Activated CD4-positive, alpha-beta T cell treated with anti-CD3 and anti-CD28 coated beads, Interleukin-2, amount 10 ng/mL, durations not matched to agents 24 days and 14 days (primary cell): ENCODE measurements at regions of chr15 and their contacts with region 1.

Region 1: GRCh38 chr15:60044636-60045270 is 40.6 kb downstream of the FOXB1 start:
- DNase-seq: peak; percentile 82
- H3K4me3 Mint-ChIP-seq: peak overlapping the region; percentile 54
- H3K27ac Mint-ChIP-seq: peak overlapping the region; percentile 78
- H3K4me1 Mint-ChIP-seq: peaks cover 20% of the 10 kb centered on the region
- H3K27me3 Mint-ChIP-seq: peaks cover 23% of the 10 kb centered on the region

Region 2: GRCh38 chr15:60017538-60018520 is 26.9 kb before region 1 on chr15:
- intact Hi-C with region 1: loop called (anchors 2 kb)
- DNase-seq: peak; percentile 72
- H3K4me3 Mint-ChIP-seq: peak overlapping the region; percentile 0
- H3K27ac Mint-ChIP-seq: peak overlapping the region; percentile 40
- H3K4me1 Mint-ChIP-seq: peaks cover 23% of the 10 kb centered on the region
- H3K27me3 Mint-ChIP-seq: peaks cover 24% of the 10 kb centered on the region

Region 3: GRCh38 chr15:60077581-60078359 is 33.0 kb after region 1 on chr15:
- intact Hi-C with region 1: loop called (anchors 1 kb)
- DNase-seq: peak; percentile 64
- H3K4me3 Mint-ChIP-seq: no peak overlapping the region
- H3K27ac Mint-ChIP-seq: peak overlapping the region; percentile 61
- H3K4me1 Mint-ChIP-seq: peaks cover 39% of the 10 kb centered on the region
- H3K27me3 Mint-ChIP-seq: peaks cover 8% of the 10 kb centered on the region

Region 4: GRCh38 chr15:60128000-60128376 is 83.2 kb after region 1 on chr15:
- intact Hi-C with region 1: loop called (anchors 2 kb)
- DNase-seq: no peak
- H3K4me3 Mint-ChIP-seq: peak overlapping the region; percentile 86
- H3K27ac Mint-ChIP-seq: peak overlapping the region; percentile 84
- H3K4me1 Mint-ChIP-seq: peaks cover 51% of the 10 kb centered on the region
- H3K27me3 Mint-ChIP-seq: peaks cover 12% of the 10 kb centered on the region